Kidney (tissue), 22 donors: ENCODE measurements at regions of chr1 and their contacts with region 1.

Region 1: GRCh38 chr1:72296481-72296880 is 14.1 kb upstream of the NEGR1 start:
- DNase-seq: no peak
- H3K4me3 ChIP-seq: no peak overlapping the region
- H3K27ac ChIP-seq: no peak overlapping the region
- H3K4me1 ChIP-seq: no peaks in the 10 kb centered on the region
- H3K27me3 ChIP-seq: no peaks in the 10 kb centered on the region
- CTCF ChIP-seq: no peak

Region 2: GRCh38 chr1:72341661-72342060 is 45.2 kb after region 1 on chr1:
- intact Hi-C with region 1: loop called (anchors 5 kb)
- DNase-seq: no peak
- H3K4me3 ChIP-seq: no peak overlapping the region
- H3K27ac ChIP-seq: no peak overlapping the region
- H3K4me1 ChIP-seq: no peaks in the 10 kb centered on the region
- H3K27me3 ChIP-seq: no peaks in the 10 kb centered on the region
- CTCF ChIP-seq: no peak